ENCODE measurements at regions of chr12 and their contacts with region 1.

Region 1: DNA sequence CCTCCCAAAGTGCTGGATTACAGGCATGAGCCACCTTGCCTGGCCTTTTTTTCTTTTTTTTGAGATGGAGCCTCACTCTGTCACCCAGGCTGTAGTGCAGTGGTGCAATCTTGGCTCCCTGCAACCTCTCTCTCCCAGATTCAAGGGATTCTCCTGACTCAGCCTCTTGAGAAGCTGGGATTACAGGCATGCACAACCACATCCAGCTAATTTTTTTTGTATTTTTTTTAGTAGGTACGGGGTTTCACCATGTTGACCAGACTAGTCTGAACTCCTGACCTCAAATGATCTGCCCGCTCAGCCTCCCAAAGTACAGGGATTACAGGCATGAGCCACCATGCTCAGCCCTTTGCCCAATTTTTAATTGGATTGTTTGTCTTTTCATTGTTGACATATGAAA is 58.0 kb downstream of the SINHCAF start:
- DNase-seq: no peak
- CTCF ChIP-seq: no peak

Region 2: DNA sequence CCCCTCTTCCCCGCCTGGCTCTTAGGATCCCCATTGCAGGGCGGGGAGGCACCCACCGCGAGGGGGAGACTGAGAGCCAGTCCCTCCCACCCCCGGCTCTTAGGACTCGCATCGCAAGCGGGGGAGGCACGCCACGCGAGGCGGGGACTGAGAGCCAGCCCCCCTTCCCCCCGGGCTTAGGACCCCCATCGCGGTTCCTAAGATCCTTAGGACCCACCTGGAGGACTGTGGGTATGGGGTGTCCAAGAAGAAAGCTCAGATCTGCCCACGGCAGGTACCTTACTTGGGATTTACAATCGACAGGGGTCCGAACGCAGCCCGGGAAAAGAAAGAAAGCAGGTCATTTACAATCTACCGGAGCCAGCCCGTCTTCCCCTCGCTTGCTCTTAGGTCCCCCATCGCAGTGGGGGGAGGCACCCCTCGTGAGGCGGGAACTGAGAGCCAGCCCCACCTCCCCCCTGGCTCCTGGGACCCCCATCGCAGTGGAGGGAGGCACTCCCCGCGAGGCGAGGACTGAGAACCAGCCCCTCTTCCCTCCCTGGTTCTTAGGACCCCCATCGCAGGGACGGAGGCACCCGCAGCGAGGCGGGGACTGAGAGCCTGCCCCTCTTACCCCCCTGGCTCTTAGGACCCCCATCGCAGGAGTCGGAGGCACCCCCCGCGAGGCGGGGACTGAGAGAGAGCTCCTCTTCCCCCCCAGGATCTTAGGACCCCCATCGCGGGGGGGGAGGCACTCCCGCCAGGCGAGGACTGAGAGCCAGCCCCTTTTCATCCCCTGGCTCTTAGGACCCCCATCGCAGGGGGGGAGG is 150.6 kb before region 1 on chr12:
- CTCF ChIA-PET with region 1: interaction called, 12 read pairs
- POLR2A ChIA-PET with region 1: no interaction called
- DNase-seq: peak; percentile 65
- CTCF ChIP-seq: peak; percentile 69

Region 3: GRCh38 chr12:31250179-31250578 is 17.8 kb before region 1 on chr12:
- CTCF ChIA-PET with region 1: interaction called, 75 read pairs
- POLR2A ChIA-PET with region 1: no interaction called
- DNase-seq: no peak
- CTCF ChIP-seq: no peak

Region 4: GRCh38 chr12:31288381-31288780 is 20.4 kb after region 1 on chr12:
- CTCF ChIA-PET with region 1: interaction called, 47 read pairs
- POLR2A ChIA-PET with region 1: no interaction called
- DNase-seq: no peak
- CTCF ChIP-seq: no peak

Region 5: DNA sequence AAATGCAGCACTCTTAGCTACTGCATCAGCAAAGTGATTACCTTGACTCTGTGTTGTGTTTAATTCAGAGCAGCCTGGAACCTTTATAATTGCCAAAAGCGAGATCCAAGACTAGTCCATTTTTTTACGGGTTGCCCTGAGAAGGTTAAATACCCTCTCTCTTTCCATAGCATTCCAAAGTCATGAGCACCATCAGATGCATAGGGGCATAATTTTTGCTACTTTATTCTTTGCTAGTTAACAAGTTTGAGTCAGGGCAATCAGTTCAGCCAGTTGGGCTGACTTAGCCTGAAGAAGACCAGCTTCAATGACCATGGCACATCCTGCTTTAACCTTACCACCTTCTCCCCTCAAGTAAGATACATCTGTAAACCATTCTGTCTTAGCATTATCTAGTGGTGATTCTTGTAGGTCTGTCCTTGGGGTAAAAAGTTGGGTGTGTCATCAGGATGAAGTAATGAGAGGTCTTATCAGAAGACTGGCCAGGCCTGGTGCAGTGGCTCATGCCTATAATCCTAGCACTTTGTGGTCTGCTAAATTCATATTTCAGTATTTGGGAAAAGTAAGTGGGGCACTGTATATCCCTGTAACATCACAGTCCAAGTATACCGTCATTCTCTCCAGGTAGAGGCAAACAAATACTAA is 38.8 kb after region 1 on chr12:
- CTCF ChIA-PET with region 1: interaction called, 20 read pairs
- POLR2A ChIA-PET with region 1: no interaction called
- DNase-seq: no peak
- CTCF ChIP-seq: no peak

Region 6: GRCh38 chr12:31325877-31326631 is 58.1 kb after region 1 on chr12 and contains the start of gene SINHCAF:
- CTCF ChIA-PET with region 1: interaction called, 12 read pairs
- POLR2A ChIA-PET with region 1: no interaction called
- DNase-seq: peak; percentile 94
- CTCF ChIP-seq: no peak

Region 7: DNA sequence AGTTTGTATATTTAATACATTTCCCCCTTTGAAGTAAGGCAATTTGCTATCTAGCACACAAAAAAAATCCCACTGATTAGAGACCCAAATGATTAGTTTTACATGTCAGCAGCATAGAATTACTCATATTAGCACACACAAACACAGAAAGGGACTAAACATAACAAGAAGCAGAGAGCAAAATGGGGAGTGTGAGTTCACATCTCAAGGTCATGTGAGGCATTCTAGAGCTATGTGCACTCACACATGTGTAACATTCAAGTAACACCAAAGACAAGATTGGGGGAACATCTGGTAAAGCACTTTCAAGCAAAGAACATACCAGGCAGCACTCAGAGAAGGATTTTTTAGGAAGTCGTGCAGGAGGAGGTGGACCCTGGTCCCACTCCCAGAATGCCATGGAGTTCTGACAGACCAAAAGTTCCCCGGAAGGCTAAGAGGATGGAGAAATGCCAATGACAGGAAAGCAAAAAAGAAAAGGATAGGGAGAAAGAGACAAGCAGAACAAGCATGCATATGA is 163.8 kb after region 1 on chr12:
- CTCF ChIA-PET with region 1: no interaction called
- POLR2A ChIA-PET with region 1: no interaction called
- DNase-seq: no peak
- CTCF ChIP-seq: no peak

Measured in GM10248 (cell line).